CD8-positive, alpha-beta memory T cell (primary cell): ENCODE measurements at regions of chr1 and their contacts with region 1.

Region 1: DNA sequence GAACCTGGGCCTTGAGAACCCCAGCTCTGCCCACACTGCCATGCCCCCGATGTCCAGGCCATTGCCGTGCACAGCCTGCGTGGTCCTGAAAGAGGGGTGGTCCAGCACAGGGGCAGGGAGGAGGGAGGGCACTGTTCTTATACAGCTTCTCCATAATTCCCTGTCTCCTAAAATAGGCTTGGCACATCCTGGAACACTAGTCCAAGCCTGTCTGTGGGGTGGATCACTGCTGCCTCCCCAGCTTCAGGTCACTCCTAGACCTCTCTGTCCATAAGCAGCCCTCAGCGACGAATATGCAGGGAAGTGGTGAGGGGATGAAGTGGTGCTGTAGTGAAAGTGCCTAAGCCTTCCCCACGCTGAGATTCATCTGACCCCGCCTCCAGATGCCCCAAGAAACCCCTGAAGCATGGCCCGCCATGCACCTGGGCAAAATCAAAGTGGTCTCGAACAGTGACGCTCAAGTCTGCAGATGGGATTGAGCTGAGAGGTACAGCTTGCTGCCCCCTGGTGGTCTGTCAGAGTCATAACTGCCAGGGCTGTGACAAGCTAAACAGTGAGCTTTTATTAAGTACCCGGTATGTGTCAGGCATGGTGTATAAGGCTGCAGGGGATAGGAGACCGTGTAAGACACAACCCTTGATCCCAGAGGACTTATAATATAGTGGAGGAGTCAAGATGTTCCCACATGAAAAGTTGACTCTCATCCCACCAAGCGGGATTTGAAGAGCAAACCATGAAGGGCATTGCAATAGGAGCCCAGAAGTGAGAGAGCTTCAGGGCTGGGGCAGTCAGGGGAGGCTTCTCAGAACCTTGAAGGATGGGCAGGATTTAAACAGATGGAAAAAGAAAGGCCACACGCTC is 66.6 kb downstream of the FAM163A start:
- DNase-seq: peak; percentile 48 to 74 (median 64)
- H3K4me3 ChIP-seq: no peak overlapping the region
- H3K4me3 Mint-ChIP-seq: peak overlapping the region in 2 of 7 donors; percentile 7 to 30
- H3K27ac ChIP-seq: no peak overlapping the region
- H3K27ac Mint-ChIP-seq: peak overlapping the region in 2 of 8 donors; percentile 19 to 69
- H3K4me1 ChIP-seq: peaks cover 10% of the 10 kb centered on the region
- H3K4me1 Mint-ChIP-seq: peaks cover 5 to 8% (median 6%) of the 10 kb centered on the region in 3 donors
- H3K27me3 ChIP-seq: no peaks in the 10 kb centered on the region
- H3K27me3 Mint-ChIP-seq: peaks cover 11 to 23% of the 10 kb centered on the region in 2 donors

Region 2: DNA sequence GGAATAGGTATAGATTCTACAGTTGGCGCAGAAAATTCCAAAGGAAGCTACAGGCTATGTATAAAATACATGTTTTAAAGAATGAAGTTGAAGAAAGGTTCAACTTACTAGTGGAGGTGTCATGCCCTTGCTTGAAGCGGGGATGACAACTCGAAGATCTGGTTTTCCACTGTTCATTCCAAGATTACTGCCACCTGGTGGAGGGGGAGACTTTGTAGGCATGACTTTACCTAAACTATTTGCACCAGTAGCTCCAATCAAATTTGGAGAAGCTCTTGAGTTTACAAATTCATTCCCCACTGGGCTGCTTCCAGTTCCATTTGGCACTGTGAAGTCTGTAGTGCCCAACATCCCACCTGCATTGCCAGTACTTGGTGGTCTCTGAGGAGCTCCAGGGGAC is 362.2 kb before region 1 on chr1:
- CTCF ChIA-PET with region 1: no interaction called
- POLR2A ChIA-PET with region 1: no interaction called
- DNase-seq: no peak
- H3K4me3 ChIP-seq: no peak overlapping the region
- H3K4me3 Mint-ChIP-seq: no peak overlapping the region
- H3K27ac ChIP-seq: no peak overlapping the region
- H3K27ac Mint-ChIP-seq: no peak overlapping the region
- H3K4me1 ChIP-seq: no peaks in the 10 kb centered on the region
- H3K4me1 Mint-ChIP-seq: no peaks in the 10 kb centered on the region
- H3K27me3 ChIP-seq: no peaks in the 10 kb centered on the region
- H3K27me3 Mint-ChIP-seq: peaks cover 4 to 19% of the 10 kb centered on the region in 2 donors

Region 3: GRCh38 chr1:179706339-179706941 is 103.3 kb before region 1 on chr1:
- CTCF ChIA-PET with region 1: interaction called, 70 read pairs
- POLR2A ChIA-PET with region 1: no interaction called
- DNase-seq: peak; percentile 25 to 54 (median 31)
- H3K4me3 ChIP-seq: no peak overlapping the region
- H3K4me3 Mint-ChIP-seq: no peak overlapping the region
- H3K27ac ChIP-seq: no peak overlapping the region
- H3K27ac Mint-ChIP-seq: peak overlapping the region in 2 of 8 donors; percentile 18 to 40
- H3K4me1 ChIP-seq: peaks cover 4% of the 10 kb centered on the region
- H3K4me1 Mint-ChIP-seq: peaks cover 0 to 5% (median 5%) of the 10 kb centered on the region in 3 donors
- H3K27me3 ChIP-seq: no peaks in the 10 kb centered on the region
- H3K27me3 Mint-ChIP-seq: peaks cover 0 to 10% of the 10 kb centered on the region in 2 donors

Region 4: GRCh38 chr1:179793281-179793680 is 16.5 kb before region 1 on chr1:
- CTCF ChIA-PET with region 1: interaction called, 20 read pairs
- POLR2A ChIA-PET with region 1: no interaction called
- DNase-seq: no peak
- H3K4me3 ChIP-seq: no peak overlapping the region
- H3K4me3 Mint-ChIP-seq: no peak overlapping the region
- H3K27ac ChIP-seq: no peak overlapping the region
- H3K27ac Mint-ChIP-seq: no peak overlapping the region
- H3K4me1 ChIP-seq: no peaks in the 10 kb centered on the region
- H3K4me1 Mint-ChIP-seq: no peaks in the 10 kb centered on the region
- H3K27me3 ChIP-seq: peaks cover under 1% of the 10 kb centered on the region
- H3K27me3 Mint-ChIP-seq: peaks cover 5 to 20% of the 10 kb centered on the region in 2 donors

Region 5: GRCh38 chr1:179824265-179824664 is 14.5 kb after region 1 on chr1:
- CTCF ChIA-PET with region 1: interaction called, 27 read pairs
- POLR2A ChIA-PET with region 1: no interaction called
- DNase-seq: no peak
- H3K4me3 ChIP-seq: no peak overlapping the region
- H3K4me3 Mint-ChIP-seq: no peak overlapping the region
- H3K27ac ChIP-seq: no peak overlapping the region
- H3K27ac Mint-ChIP-seq: peak overlapping the region in 1 of 8 donors; percentile 13
- H3K4me1 ChIP-seq: no peaks in the 10 kb centered on the region
- H3K4me1 Mint-ChIP-seq: no peaks in the 10 kb centered on the region
- H3K27me3 ChIP-seq: no peaks in the 10 kb centered on the region
- H3K27me3 Mint-ChIP-seq: peaks cover 10 to 26% of the 10 kb centered on the region in 2 donors

Region 6: DNA sequence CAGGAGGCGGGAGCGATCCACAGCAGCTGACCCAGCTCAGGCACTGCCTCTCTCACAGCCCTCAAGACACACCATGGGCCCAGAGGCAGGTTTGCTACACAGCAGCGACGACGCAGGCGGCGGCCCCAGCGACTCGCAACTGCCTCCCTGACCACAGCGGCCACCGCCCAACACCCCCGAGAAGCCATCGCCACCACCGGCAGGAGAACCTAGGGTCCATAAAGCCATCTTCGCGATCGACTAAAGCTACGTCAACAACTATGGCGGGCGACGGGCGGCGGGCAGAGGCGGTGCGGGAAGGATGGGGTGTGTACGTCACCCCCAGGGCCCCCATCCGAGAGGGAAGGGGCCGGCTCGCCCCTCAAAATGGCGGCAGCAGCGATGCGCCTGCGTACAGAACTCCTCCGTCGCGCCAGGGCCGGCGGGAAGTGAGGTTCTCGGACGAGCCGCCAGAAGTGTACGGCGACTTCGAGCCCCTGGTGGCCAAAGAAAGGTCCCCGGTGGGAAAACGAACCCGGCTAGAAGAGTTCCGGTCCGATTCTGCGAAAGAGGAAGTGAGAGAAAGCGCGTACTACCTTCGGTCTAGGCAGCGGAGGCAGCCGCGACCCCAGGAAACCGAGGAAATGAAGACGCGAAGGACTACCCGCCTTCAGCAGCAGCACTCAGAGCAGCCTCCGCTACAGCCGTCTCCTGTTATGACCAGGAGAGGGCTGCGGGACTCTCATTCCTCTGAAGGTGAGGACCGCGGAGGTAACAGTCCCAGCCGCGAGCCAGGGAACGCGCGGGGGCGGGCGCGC is 72.7 kb after region 1 on chr1 and contains the start of gene TOR1AIP1:
- CTCF ChIA-PET with region 1: interaction called, 10 read pairs
- POLR2A ChIA-PET with region 1: interaction called, 7 read pairs
- DNase-seq: peak; percentile 95 to 99 (median 98)
- H3K4me3 ChIP-seq: peak within 1 kb of the TSS; percentile 98
- H3K4me3 Mint-ChIP-seq: peak within 1 kb of the TSS; percentile 93 to 98 (median 95)
- H3K27ac ChIP-seq: peak within 1 kb of the TSS; percentile 100
- H3K27ac Mint-ChIP-seq: peak within 1 kb of the TSS; percentile 99 to 100 (median 100)
- H3K4me1 ChIP-seq: peaks cover 51% of the 10 kb centered on the region
- H3K4me1 Mint-ChIP-seq: peaks cover 58 to 77% (median 72%) of the 10 kb centered on the region in 3 donors
- H3K27me3 ChIP-seq: no peaks in the 10 kb centered on the region
- H3K27me3 Mint-ChIP-seq: no peaks in the 10 kb centered on the region
- total RNA-seq, gene TOR1AIP1: 51.0 to 52.6 TPM